ENCODE measurements at regions of chr19 and their contacts with region 1.

Region 1: DNA sequence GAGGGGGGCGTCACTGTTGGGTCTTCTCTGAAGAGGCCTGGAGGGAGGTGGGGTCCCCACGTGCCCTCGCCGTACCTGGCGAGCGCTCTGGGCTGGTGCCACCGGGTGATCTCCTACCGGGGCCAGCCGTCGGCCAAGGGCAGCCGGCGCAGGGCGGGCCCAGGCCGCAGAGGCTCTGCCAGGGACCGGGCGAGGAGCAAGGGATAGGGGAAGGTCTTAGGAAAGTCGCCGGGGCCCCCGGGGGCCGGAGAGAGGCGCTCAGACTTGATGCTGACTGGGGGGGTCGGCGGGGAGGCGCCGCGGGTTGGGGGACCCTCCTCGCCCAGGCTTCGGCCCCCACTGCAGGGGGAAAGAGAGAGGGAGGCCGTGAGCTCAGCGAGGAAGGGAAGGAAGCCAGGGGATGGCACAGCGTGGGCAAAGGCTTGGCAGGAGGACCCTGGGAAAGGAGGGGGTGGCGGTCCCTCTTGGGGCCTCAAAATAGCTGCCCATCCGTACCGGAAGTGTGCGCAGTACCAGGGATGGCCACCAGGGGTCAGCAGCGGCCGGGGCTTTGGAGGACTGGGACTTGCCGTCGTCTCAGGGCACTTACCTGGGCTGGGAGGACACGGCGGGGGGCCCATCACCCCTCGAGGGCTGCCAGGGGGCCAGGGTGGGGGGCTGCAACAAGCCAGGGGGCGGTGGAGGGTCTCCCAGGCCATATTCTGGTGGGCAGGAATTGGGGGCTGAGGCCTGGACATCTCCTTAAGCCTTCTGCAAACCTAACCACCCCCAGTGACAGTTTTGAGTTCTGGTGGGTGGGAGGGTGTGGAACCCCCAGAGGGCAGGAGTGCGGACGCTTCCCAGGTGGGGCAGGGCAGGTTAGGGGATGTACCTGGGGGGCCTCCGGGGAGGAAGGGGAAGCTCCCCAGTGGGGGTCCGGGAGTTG is 7.7 kb upstream of the TMEM161A start:
- DNase-seq: no peak
- H3K4me3 ChIP-seq: no peak overlapping the region
- CTCF ChIP-seq: peak; percentile 97

Region 2: DNA sequence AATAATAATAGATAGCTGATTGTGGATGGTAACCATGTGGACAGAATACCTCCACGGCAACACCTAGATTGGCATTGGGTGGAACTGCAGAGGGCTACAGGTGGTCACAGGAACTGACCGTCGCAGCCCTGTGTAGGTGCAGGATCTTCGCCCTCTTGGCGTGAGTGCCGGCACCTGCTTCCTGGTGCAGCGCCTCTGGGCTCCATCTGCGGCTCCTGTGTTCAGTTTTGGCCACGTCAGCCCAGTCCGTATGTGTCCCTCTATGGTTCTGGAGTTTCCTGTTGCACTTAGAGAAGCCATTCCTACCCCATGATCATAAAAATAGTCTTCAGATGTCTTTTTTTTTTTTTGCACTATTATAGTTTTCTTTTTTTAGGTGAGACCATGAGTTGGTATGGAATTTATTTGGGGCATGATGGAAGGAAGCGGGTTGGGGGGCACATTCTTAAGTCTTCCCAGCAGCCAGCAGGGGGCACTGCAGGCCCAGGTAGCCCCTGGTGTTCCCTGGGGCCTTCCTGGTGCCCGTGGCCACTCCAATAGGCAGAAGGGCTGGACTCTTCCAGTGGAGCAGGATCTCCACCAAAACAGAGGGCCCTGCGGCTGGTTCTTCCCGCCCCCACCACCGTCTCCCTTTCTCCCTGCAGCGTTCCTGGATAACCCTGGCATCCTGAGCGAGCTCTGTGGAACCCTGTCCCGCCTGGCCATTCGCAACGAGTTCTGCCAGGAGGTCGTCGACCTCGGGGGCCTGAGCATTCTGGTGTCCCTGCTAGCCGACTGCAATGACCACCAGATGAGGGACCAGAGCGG is 92.2 kb before region 1 on chr19:
- CTCF ChIA-PET with region 1: interaction called, 58 read pairs
- POLR2A ChIA-PET with region 1: no interaction called
- DNase-seq: no peak
- H3K4me3 ChIP-seq: no peak overlapping the region
- CTCF ChIP-seq: peak; percentile 71

Region 3: DNA sequence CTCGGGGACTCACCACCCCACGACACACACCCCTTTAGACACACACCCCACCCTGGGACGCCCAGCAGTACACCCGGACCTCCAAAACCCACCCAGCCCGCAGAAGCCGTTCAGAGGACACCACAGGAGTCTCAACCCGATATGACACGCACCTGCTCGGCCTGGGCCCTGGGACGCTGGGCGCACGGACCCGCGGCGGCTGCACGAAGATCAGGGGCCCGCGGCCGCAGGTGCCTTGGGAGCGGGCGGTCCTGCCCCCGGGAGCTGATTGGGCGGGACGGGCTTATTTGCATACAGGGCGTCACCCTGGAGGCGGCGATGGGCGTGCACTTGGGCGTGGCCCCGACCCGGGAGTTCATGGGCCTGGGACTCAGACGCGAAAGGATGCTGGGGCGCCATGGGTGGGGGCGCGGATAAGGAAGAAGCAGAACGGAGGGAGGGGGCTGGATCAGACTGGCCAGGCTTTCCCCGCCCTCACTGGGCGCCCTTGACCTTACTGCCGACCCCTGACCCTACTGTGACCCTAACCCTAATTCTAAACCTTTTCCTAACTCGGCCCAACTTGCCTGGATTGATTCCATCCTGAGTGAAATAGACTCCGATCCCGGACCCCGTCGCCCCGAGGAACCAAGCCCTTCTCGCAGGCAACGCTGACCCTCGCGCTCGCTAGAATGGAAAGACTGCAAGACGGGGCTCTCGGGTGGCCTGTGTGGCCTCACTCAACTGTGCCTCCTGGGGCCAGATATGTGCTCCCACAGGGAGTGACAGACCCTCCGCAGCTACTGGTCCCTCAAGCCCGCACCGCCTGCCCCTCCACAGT is 24.3 kb after region 1 on chr19 and contains the start of gene MEF2B:
- CTCF ChIA-PET with region 1: interaction called, 182 read pairs
- POLR2A ChIA-PET with region 1: no interaction called
- DNase-seq: no peak
- H3K4me3 ChIP-seq: peak within 1 kb of the TSS; percentile 23
- CTCF ChIP-seq: no peak

Region 4: GRCh38 chr19:19224852-19225494 is 79.0 kb after region 1 on chr19:
- CTCF ChIA-PET with region 1: interaction called, 16 read pairs
- POLR2A ChIA-PET with region 1: no interaction called
- DNase-seq: no peak
- H3K4me3 ChIP-seq: peak overlapping the region; percentile 33; the same call in 1 of the 2 replicates
- CTCF ChIP-seq: peak; percentile 76

Region 5: GRCh38 chr19:19269952-19270694 is 124.2 kb after region 1 on chr19:
- CTCF ChIA-PET with region 1: no interaction called
- POLR2A ChIA-PET with region 1: no interaction called
- DNase-seq: no peak
- H3K4me3 ChIP-seq: no peak overlapping the region
- CTCF ChIP-seq: no peak

Region 6: GRCh38 chr19:19482809-19483596 is 337.1 kb after region 1 on chr19:
- CTCF ChIA-PET with region 1: no interaction called
- POLR2A ChIA-PET with region 1: no interaction called
- DNase-seq: no peak
- H3K4me3 ChIP-seq: no peak overlapping the region
- CTCF ChIP-seq: no peak

Measured in AG04449 (cell line).